Left colon (tissue), 2 donors: ENCODE measurements at regions of chr2 and their contacts with region 1.

Region 1: GRCh38 chr2:11477994-11478393 is 12.0 kb upstream of the E2F6 start:
- DNase-seq: peak; percentile 73 to 96
- ATAC-seq: peak; percentile 76

Region 2: GRCh38 chr2:11583840-11584524 is 106.0 kb after region 1 on chr2:
- intact Hi-C with region 1: loop called (anchors 2 to 10 kb)
- DNase-seq: peak; percentile 38 to 64
- ATAC-seq: peak; percentile 73

Region 3: GRCh38 chr2:11784747-11785610 is 307.0 kb after region 1 on chr2:
- intact Hi-C with region 1: loop called in 1 of 2 experiments (anchors 10 kb)
- DNase-seq: peak in 1 of 2 donors; percentile 58
- ATAC-seq: peak; percentile 76